Naive thymus-derived CD4-positive, alpha-beta T cell (primary cell): ENCODE measurements at regions of chr4 and their contacts with region 1.

Region 1: DNA sequence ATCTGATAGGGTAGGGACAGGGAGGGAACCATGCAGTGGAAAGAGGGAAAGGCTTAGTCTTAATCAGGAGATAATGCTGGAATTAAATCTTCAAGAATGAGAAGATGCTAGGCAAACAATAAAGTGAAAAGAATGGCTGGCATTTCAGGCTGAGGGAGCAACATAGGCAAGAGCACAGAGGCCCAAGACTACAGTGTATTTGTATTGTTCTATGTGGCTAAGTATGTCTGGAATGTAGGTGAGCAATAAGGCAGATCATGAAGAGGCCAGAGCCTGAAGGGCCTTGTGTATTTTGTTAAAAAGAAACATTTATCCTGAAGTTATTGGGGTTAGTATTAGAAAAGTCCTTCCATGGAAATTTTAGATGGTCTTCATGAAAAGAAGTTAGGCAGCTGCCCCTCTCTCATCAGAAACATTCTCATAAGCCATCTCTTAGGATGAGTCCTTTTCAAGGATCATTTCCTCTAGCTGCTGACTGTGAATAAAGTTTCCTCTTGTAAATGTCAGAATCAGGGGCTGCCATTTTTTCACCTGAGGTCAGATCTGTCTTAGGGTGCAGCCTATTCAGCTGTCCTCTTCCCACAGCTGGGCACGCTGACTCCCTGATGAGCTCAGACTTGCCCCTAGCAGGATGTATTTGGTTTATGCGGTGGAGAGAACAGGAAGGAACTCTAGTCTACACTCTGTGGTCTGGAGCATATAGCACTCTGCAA is 46.3 kb downstream of the ATP10D start:
- DNase-seq: peak; percentile 7 to 60 (median 42)
- ATAC-seq: peak; percentile 97
- H3K4me3 ChIP-seq: peak overlapping the region; percentile 40
- H3K4me3 Mint-ChIP-seq: peak overlapping the region; percentile 37 to 76 (median 68)
- H3K27ac ChIP-seq: no peak overlapping the region
- H3K27ac Mint-ChIP-seq: peak overlapping the region in 7 of 9 donors; percentile 3 to 76 (median 57)
- H3K4me1 ChIP-seq: peaks cover 25 to 42% of the 10 kb centered on the region in 2 donors
- H3K4me1 Mint-ChIP-seq: peaks cover 32 to 54% (median 44%) of the 10 kb centered on the region in 7 donors
- H3K27me3 ChIP-seq: no peaks in the 10 kb centered on the region
- H3K27me3 Mint-ChIP-seq: no peaks in the 10 kb centered on the region

Region 2: GRCh38 chr4:47485047-47485692 is 46.2 kb before region 1 on chr4 and contains the start of gene ATP10D:
- CTCF ChIA-PET with region 1: no interaction called
- POLR2A ChIA-PET with region 1: interaction called, 4 read pairs
- intact Hi-C with region 1: loop called (anchors 5 kb)
- DNase-seq: peak; percentile 56 to 77 (median 66)
- ATAC-seq: peak; percentile 97
- H3K4me3 ChIP-seq: peak within 1 kb of the TSS; percentile 75
- H3K4me3 Mint-ChIP-seq: peak within 1 kb of the TSS; percentile 87 to 98 (median 94)
- H3K27ac ChIP-seq: peak within 1 kb of the TSS; percentile 70
- H3K27ac Mint-ChIP-seq: peak within 1 kb of the TSS; percentile 78 to 97 (median 89)
- H3K4me1 ChIP-seq: peaks cover 7 to 9% of the 10 kb centered on the region in 2 donors
- H3K4me1 Mint-ChIP-seq: peaks cover 15 to 36% (median 26%) of the 10 kb centered on the region in 7 donors
- H3K27me3 ChIP-seq: no peaks in the 10 kb centered on the region
- H3K27me3 Mint-ChIP-seq: peaks cover 0 to 5% (median 0%) of the 10 kb centered on the region in 5 donors
- total RNA-seq, gene ATP10D: 3.3 to 29.0 (median 6.1) TPM

Region 3: GRCh38 chr4:47543331-47543730 is 11.9 kb after region 1 on chr4:
- CTCF ChIA-PET with region 1: interaction called, 3 read pairs
- POLR2A ChIA-PET with region 1: no interaction called
- intact Hi-C with region 1: loop called in 1 of 2 experiments (anchors 2 kb)
- DNase-seq: no peak
- ATAC-seq: no peak
- H3K4me3 ChIP-seq: no peak overlapping the region
- H3K4me3 Mint-ChIP-seq: no peak overlapping the region
- H3K27ac ChIP-seq: no peak overlapping the region
- H3K27ac Mint-ChIP-seq: no peak overlapping the region
- H3K4me1 ChIP-seq: no peaks in the 10 kb centered on the region
- H3K4me1 Mint-ChIP-seq: peaks cover 0 to 6% (median 0%) of the 10 kb centered on the region in 7 donors
- H3K27me3 ChIP-seq: no peaks in the 10 kb centered on the region
- H3K27me3 Mint-ChIP-seq: no peaks in the 10 kb centered on the region

Region 4: GRCh38 chr4:48212165-48212564 is 680.8 kb after region 1 on chr4:
- CTCF ChIA-PET with region 1: no interaction called
- POLR2A ChIA-PET with region 1: no interaction called
- intact Hi-C with region 1: no loop called
- DNase-seq: no peak
- ATAC-seq: peak; percentile 88
- H3K4me3 ChIP-seq: no peak overlapping the region
- H3K4me3 Mint-ChIP-seq: peak overlapping the region in 1 of 10 donors; percentile 25
- H3K27ac ChIP-seq: no peak overlapping the region
- H3K27ac Mint-ChIP-seq: no peak overlapping the region
- H3K4me1 ChIP-seq: no peaks in the 10 kb centered on the region
- H3K4me1 Mint-ChIP-seq: peaks cover 0 to 19% (median 5%) of the 10 kb centered on the region in 7 donors
- H3K27me3 ChIP-seq: no peaks in the 10 kb centered on the region
- H3K27me3 Mint-ChIP-seq: peaks cover 0 to 3% (median 0%) of the 10 kb centered on the region in 5 donors